Activated T-helper 2 cell treated with anti-CD3 and anti-CD28 coated beads, Interferon-gamma antibody, Interleukin-2, Interleukin-4, amounts not matched to agents 10 μg/mL and 5 μg/mL and 100 μg/mL, durations not matched to agents 14 hours and 24 hours and 36 hours (primary cell): ENCODE measurements at regions of chr6 and their contacts with region 1.

Region 1: DNA sequence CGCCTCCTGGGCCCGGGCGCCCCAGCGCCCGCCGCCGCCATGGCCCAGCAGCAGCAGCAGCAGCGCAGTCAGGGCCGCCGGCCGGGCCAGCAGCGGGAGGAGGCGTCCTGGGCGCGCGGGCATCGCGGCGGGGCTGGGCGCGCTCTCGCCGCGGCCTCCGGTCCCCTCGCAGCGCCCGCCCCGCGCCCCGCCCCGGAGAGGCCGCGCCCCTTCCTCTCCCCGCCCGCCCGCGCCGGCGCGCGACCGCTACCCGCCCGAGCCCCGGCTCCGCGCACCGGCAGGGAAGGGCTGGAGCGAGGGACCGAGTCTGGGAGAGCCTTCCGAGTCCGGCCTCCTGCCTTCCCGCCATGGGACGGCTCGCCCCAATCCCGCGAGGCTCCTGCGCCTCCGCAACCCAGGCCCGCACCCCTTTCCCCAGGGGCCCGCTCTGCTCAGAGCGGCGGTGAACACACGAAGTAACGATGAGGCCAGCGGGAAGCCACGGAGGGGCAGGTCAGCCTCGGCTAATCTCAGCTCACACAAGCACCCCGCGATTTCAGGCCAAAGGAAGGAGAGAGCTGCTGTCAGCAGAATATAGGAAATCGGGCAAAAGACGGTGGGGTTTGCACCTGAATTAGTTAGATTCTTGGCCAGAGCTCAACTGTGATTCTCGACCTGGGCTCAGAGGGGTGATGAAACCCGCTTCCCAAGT is at the start of gene TXNDC5:
- DNase-seq: peak; percentile 61
- H3K4me3 Mint-ChIP-seq: peak within 1 kb of the TSS; percentile 90
- H3K27ac Mint-ChIP-seq: peak within 1 kb of the TSS; percentile 75
- H3K4me1 Mint-ChIP-seq: peaks cover 12% of the 10 kb centered on the region
- H3K27me3 Mint-ChIP-seq: peaks cover 1% of the 10 kb centered on the region
- total RNA-seq, gene TXNDC5: 113 and 117 TPM in 2 replicates

Region 2: DNA sequence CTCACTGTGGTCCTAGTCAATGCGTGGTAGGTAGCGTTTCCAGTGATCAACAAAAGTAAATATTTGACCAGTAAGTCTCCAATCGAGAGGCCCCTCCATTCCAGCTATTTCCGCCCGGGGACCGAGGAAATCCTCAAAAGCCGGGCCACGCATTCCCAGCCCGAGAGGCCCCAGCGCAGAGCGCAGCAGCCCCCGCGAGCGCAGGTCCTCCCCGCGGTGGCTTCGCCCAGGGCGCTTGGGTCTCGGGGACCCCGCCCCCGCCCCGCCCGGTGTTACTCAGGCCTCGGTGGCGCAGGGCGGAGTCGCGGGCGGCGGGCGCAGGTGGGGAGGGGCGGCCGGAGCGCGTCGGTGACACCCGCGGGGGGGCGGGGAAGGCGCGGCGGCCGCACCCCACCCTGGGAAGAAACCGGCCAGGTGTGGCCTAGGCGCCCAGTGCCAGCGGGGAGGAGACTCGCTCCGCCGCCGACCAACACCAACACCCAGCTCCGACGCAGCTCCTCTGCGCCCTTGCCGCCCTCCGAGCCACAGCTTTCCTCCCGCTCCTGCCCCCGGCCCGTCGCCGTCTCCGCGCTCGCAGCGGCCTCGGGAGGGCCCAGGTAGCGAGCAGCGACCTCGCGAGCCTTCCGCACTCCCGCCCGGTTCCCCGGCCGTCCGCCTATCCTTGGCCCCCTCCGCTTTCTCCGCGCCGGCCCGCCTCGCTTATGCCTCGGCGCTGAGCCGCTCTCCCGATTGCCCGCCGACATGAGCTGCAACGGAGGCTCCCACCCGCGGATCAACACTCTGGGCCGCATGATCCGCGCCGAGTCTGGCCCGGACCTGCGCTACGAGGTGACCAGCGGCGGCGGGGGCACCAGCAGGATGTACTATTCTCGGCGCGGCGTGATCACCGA is 369.4 kb before region 1 on chr6 and contains the start of gene DSP:
- intact Hi-C with region 1: no loop called
- DNase-seq: peak; percentile 15
- H3K4me3 Mint-ChIP-seq: peak within 1 kb of the TSS; percentile 80
- H3K27ac Mint-ChIP-seq: no peak within 1 kb of the TSS
- H3K4me1 Mint-ChIP-seq: peaks cover 9% of the 10 kb centered on the region
- H3K27me3 Mint-ChIP-seq: peaks cover 75% of the 10 kb centered on the region
- total RNA-seq, gene DSP: 0.02 TPM in 2 replicates

Region 3: DNA sequence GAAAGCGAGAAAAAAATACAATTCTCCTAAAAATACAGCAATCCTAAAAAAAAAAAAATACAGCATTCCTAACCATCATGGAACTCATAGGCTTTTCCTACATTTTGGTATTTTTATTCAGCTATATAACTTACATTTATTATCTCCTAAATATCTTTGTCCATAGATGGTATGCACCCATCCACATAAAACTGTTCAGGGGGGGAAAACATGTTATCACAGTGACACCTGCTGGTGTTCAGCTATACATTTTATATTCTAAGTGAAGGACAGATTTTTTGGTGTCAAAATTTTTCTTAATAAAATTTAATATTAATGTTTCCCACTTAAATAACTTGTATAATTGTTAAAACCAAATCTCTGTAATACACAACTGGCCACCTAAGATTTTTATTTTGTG is 95.4 kb after region 1 on chr6:
- intact Hi-C with region 1: loop called (anchors 5 kb)
- DNase-seq: no peak
- H3K4me3 Mint-ChIP-seq: no peak overlapping the region
- H3K27ac Mint-ChIP-seq: no peak overlapping the region
- H3K4me1 Mint-ChIP-seq: peaks cover 4% of the 10 kb centered on the region
- H3K27me3 Mint-ChIP-seq: no peaks in the 10 kb centered on the region

Region 4: GRCh38 chr6:8047541-8048292 is 136.9 kb after region 1 on chr6:
- intact Hi-C with region 1: no loop called
- DNase-seq: no peak
- H3K4me3 Mint-ChIP-seq: no peak overlapping the region
- H3K27ac Mint-ChIP-seq: no peak overlapping the region
- H3K4me1 Mint-ChIP-seq: peaks cover 6% of the 10 kb centered on the region
- H3K27me3 Mint-ChIP-seq: no peaks in the 10 kb centered on the region

Region 5: GRCh38 chr6:8435160-8435852 is 524.5 kb after region 1 on chr6 and contains the start of gene SLC35B3:
- intact Hi-C with region 1: loop called (anchors 10 kb)
- DNase-seq: peak; percentile 98
- H3K4me3 Mint-ChIP-seq: peak within 1 kb of the TSS; percentile 94
- H3K27ac Mint-ChIP-seq: peak within 1 kb of the TSS; percentile 98
- H3K4me1 Mint-ChIP-seq: peaks cover 29% of the 10 kb centered on the region
- H3K27me3 Mint-ChIP-seq: no peaks in the 10 kb centered on the region
- total RNA-seq, gene SLC35B3: 6.3 and 7.0 TPM in 2 replicates